Activated CD4-positive, alpha-beta memory T cell treated with anti-CD3 and anti-CD28 coated beads for 36 hours (primary cell): ENCODE measurements at regions of chr2 and their contacts with region 1.

Region 1: GRCh38 chr2:222057347-222058073 is 241.3 kb downstream of the PAX3 start:
- DNase-seq: no peak
- H3K4me3 Mint-ChIP-seq: no peak overlapping the region
- H3K27ac Mint-ChIP-seq: no peak overlapping the region
- H3K4me1 Mint-ChIP-seq: no peaks in the 10 kb centered on the region
- H3K27me3 Mint-ChIP-seq: peaks cover 14% of the 10 kb centered on the region

Region 2: DNA sequence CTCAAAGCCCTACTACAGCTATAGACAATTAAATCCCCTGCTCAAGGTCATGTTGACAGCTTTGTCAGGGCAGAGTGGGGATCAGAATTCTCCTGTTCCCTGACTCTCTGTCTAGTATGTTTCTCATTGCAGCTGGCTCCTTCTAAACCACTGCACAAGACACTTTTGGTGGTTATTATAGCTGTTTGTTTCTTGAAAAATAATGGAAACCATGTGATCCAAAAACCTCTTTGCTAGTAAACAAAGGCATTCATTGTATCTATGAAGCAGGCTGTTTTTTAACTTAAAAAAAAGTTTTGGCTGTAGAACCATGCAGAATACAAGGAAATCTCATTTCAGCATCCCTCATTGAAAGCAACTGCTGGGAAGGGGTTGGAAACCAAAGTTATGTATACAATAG is 132.9 kb before region 1 on chr2:
- CTCF ChIA-PET with region 1: no interaction called
- POLR2A ChIA-PET with region 1: no interaction called
- intact Hi-C with region 1: no loop called
- DNase-seq: no peak
- H3K4me3 Mint-ChIP-seq: no peak overlapping the region
- H3K27ac Mint-ChIP-seq: no peak overlapping the region
- H3K4me1 Mint-ChIP-seq: no peaks in the 10 kb centered on the region
- H3K27me3 Mint-ChIP-seq: no peaks in the 10 kb centered on the region

Region 3: DNA sequence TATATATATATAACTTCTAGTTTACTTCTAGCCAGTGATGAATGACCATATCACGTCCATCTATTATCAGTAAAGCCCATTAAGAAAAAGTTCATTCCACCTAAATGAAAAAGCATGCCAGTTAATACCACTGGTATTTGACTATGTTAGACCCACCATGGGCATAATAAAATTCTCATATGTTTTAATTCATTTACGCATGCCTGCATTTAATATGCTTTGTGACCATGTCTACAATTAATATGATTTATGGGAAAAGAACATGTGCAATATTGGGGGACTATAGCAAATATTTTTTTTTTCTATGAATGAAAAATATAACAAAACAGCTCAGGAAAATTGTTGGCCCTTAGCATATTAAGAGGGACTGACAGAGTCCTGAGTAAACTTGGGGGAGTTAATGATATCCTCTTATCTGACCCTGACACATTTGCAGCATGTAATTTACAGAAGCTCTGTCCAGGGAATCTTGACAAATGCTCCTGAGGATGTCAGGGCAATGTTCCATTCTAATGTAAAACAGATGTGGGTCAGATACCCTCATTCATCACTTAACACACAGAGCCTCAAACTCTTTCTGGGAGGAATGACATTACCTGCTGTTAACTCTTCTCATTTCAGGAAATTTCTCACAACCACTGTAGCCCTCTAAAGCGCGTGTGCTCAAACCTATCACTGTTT is 150.6 kb after region 1 on chr2:
- CTCF ChIA-PET with region 1: no interaction called
- POLR2A ChIA-PET with region 1: no interaction called
- intact Hi-C with region 1: no loop called
- DNase-seq: no peak
- H3K4me3 Mint-ChIP-seq: no peak overlapping the region
- H3K27ac Mint-ChIP-seq: no peak overlapping the region
- H3K4me1 Mint-ChIP-seq: no peaks in the 10 kb centered on the region
- H3K27me3 Mint-ChIP-seq: peaks cover 7% of the 10 kb centered on the region

Region 4: DNA sequence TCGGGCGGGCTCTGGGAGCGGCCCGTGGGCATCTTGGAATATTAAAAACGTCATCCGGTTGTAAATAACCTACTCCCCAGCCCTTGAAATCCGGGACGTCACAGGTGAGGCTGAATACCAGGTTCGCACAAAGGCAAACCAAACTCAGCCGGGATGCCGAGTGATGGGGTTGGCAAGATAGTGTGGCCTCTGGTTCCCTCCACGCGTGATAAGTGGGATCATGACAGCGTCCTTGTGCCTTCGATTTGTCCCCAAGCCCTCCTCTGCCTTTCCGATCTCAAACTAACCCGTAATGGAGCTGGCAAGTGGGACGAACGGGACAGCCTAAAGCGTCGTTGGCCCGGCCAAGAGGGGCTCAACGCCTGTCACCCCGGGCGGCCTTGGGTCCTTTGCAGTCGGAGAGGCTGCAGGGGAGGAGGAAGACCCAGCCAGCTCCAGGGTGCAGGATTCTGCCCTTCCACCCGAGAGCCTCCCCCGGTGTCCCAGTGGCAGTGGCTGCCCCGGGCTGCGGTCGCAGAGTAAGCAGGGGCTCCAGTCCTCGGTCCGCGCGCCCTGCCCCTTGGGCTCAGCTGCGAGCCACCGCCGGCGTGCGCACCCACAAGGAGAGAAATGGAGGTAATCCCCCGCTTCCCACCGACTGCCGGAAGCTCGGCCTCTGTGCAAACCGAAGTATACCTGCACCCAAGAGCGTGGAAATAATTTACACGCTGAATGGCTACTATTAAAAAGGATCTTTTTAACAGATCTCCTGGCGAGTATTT is 254.6 kb after region 1 on chr2:
- CTCF ChIA-PET with region 1: no interaction called
- POLR2A ChIA-PET with region 1: no interaction called
- intact Hi-C with region 1: loop called (anchors 5 kb)
- DNase-seq: no peak
- H3K4me3 Mint-ChIP-seq: peak overlapping the region; percentile 10
- H3K27ac Mint-ChIP-seq: no peak overlapping the region
- H3K4me1 Mint-ChIP-seq: peaks cover 15% of the 10 kb centered on the region
- H3K27me3 Mint-ChIP-seq: peaks cover 81% of the 10 kb centered on the region

Region 5: DNA sequence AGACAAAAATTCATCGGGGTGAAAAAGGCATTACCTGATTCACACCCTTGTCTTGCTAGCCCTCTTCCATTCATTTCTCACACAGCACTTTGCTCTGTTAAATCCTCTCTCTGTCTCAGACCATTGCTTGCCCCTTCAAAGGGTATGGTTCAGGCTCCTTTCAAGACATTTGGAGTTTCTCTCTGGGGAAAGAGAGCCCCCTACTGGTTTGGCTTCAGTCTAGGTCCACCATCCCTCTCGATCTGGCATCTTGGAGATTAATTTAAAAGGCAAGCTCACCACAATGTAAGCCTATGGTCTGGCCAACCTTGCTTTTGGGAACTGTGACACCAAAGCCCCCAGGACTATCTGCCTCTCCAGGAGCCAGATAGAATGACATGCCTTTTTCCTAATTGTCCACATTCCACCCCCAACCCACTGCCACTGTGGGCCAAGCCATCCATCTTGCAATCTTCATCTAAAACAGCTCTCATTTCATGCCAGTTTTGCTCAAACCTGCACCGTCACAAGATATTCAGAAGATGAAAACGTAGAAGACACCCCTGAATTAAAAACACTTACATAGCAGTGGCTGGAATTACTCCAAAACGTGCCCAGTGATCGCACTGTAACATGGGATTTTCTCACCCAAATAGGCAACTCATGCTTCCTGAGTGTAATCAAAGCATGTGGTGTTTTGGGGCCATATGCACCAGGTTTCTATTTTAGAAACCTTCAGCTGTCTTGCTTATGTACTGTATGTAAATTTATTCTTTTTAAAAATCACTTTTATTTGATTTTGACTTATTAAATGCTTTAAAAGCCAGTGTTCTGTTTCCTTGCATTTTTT is 504.5 kb after region 1 on chr2:
- CTCF ChIA-PET with region 1: interaction called, 3 read pairs
- POLR2A ChIA-PET with region 1: no interaction called
- intact Hi-C with region 1: loop called (anchors 1 kb)
- DNase-seq: peak; percentile 49
- H3K4me3 Mint-ChIP-seq: no peak overlapping the region
- H3K27ac Mint-ChIP-seq: no peak overlapping the region
- H3K4me1 Mint-ChIP-seq: no peaks in the 10 kb centered on the region
- H3K27me3 Mint-ChIP-seq: no peaks in the 10 kb centered on the region

Region 6: DNA sequence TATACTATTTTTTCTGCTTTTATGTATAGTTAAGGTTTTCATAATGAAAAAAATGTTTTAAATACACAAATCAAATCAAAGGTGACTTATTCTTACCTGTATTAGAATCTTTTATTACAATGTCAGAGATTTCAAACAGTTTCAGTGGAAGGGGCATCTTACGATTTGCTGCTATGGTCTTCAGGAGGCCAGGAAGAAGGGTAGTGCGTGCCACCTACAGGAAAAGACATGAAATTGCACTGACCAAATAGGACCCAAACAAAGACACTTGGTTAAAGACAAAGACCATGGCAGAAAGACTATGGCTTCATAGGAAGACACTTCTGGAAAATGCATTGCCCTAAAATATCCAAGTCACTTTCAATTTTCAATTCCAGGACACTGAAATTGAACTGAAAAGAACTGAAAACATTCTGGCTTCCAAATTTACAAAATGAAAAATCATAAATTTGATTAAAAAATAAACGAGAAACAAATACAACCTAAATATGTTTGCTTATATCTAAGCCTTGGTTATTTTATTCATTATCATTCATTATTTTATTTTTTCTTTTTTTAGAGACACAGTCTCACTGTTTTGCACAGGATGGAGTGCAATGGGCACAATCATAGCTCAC is 556.3 kb after region 1 on chr2:
- CTCF ChIA-PET with region 1: interaction called, 3 read pairs
- POLR2A ChIA-PET with region 1: no interaction called
- intact Hi-C with region 1: loop called (anchors 1 kb)
- DNase-seq: no peak
- H3K4me3 Mint-ChIP-seq: no peak overlapping the region
- H3K27ac Mint-ChIP-seq: no peak overlapping the region
- H3K4me1 Mint-ChIP-seq: no peaks in the 10 kb centered on the region
- H3K27me3 Mint-ChIP-seq: no peaks in the 10 kb centered on the region